HCT116 (cell line): ENCODE measurements at regions of chr5 and their contacts with region 1.

Region 1: GRCh38 chr5:34467436-34467835 is 188.7 kb upstream of the RAI14 start:
- DNase-seq: no peak
- ATAC-seq: no peak
- H3K4me3 ChIP-seq: no peak overlapping the region
- H3K27ac ChIP-seq: no peak overlapping the region
- H3K4me1 ChIP-seq: no peaks in the 10 kb centered on the region
- H3K27me3 ChIP-seq: no peaks in the 10 kb centered on the region
- CTCF ChIP-seq: no peak
- POLR2A ChIP-seq: no peak
- RAD21 ChIP-seq: no peak

Region 2: DNA sequence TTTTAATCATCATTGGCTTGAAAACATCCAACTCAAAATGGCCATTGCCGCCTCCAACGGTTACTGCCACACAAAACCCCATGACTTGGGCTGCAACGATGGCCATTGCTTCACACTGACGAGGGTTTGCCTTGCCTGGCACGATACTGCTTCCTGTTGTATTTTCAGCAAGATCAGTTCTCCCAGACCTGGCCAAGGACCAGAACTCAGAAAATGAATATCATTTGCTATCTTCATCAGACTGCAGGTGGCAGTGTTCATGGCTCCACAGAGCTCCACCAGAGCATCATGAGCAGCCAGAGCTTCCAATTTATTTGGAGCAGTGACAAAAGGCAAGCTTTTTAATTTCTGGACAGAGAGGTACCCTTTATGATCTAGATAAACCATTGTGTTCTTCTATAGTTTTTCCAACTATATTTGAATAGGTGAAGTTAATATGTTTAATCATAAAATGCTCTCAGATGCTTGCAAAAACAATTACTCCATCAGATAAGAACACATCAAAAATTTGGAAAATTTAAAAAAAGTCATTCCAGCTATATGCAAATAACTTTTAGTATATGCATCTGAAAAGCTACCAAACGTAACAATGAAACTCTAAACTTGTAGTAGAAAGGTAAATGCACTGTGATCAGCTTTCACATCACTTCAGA is 470.0 kb before region 1 on chr5:
- CTCF ChIA-PET with region 1: interaction called, 3 read pairs
- POLR2A ChIA-PET with region 1: no interaction called
- RAD21 ChIA-PET with region 1: no interaction called
- intact Hi-C with region 1: loop called (anchors 2 kb)
- DNase-seq: peak; percentile 19
- ATAC-seq: peak; percentile 80
- H3K4me3 ChIP-seq: no peak overlapping the region
- H3K27ac ChIP-seq: no peak overlapping the region
- H3K4me1 ChIP-seq: no peaks in the 10 kb centered on the region
- H3K27me3 ChIP-seq: no peaks in the 10 kb centered on the region
- CTCF ChIP-seq: peak; percentile 37 to 69 (median 66); a peak in 5 of 6 replicates
- POLR2A ChIP-seq: no peak
- RAD21 ChIP-seq: peak; percentile 49